Right cardiac atrium (tissue), 5 donors: ENCODE measurements at regions of chr3 and their contacts with region 1.

Region 1: GRCh38 chr3:102673271-102674115 is 238.7 kb downstream of the ZPLD1 start:
- DNase-seq: peak; percentile 45 to 78 (median 76)
- ATAC-seq: peak; percentile 88 to 96
- H3K4me3 ChIP-seq: no peak overlapping the region
- H3K27ac ChIP-seq: peak overlapping the region; percentile 26
- H3K4me1 ChIP-seq: no peaks in the 10 kb centered on the region
- H3K27me3 ChIP-seq: no peaks in the 10 kb centered on the region

Region 2: GRCh38 chr3:102736288-102736974 is 62.9 kb after region 1 on chr3:
- intact Hi-C with region 1: loop called in 2 of 4 experiments (anchors 5 to 10 kb)
- DNase-seq: peak; percentile 36 to 76 (median 62)
- ATAC-seq: peak; percentile 86 to 89
- H3K4me3 ChIP-seq: no peak overlapping the region
- H3K27ac ChIP-seq: peak overlapping the region; percentile 11
- H3K4me1 ChIP-seq: peaks cover 4% of the 10 kb centered on the region
- H3K27me3 ChIP-seq: no peaks in the 10 kb centered on the region

Region 3: GRCh38 chr3:102745882-102746281 is 72.4 kb after region 1 on chr3:
- intact Hi-C with region 1: loop called in 1 of 4 experiments (anchors 10 kb)
- DNase-seq: no peak
- ATAC-seq: no peak
- H3K4me3 ChIP-seq: no peak overlapping the region
- H3K27ac ChIP-seq: no peak overlapping the region
- H3K4me1 ChIP-seq: no peaks in the 10 kb centered on the region
- H3K27me3 ChIP-seq: no peaks in the 10 kb centered on the region

Region 4: GRCh38 chr3:103195212-103195611 is 521.7 kb after region 1 on chr3:
- intact Hi-C with region 1: no loop called
- DNase-seq: no peak
- ATAC-seq: no peak
- H3K4me3 ChIP-seq: no peak overlapping the region
- H3K27ac ChIP-seq: no peak overlapping the region
- H3K4me1 ChIP-seq: no peaks in the 10 kb centered on the region
- H3K27me3 ChIP-seq: no peaks in the 10 kb centered on the region